ENCODE measurements at regions of chr2 and their contacts with region 1.

Region 1: GRCh38 chr2:3303583-3304406 is 73.8 kb downstream of the EIPR1 start:
- DNase-seq: peak; percentile 84 to 87 (median 86)
- ATAC-seq: peak; percentile 100
- H3K4me3 ChIP-seq: no peak overlapping the region
- H3K27ac ChIP-seq: no peak overlapping the region
- H3K4me1 ChIP-seq: peaks cover 0 to 26% of the 10 kb centered on the region in 2 experiments; a peak in 2 of 5 replicates
- H3K27me3 ChIP-seq: no peaks in the 10 kb centered on the region
- CTCF ChIP-seq: peak; percentile 88 to 93 (median 91)
- EP300 ChIP-seq: no peak
- POLR2A ChIP-seq: no peak
- RAD21 ChIP-seq: peak; percentile 74 to 86

Region 2: DNA sequence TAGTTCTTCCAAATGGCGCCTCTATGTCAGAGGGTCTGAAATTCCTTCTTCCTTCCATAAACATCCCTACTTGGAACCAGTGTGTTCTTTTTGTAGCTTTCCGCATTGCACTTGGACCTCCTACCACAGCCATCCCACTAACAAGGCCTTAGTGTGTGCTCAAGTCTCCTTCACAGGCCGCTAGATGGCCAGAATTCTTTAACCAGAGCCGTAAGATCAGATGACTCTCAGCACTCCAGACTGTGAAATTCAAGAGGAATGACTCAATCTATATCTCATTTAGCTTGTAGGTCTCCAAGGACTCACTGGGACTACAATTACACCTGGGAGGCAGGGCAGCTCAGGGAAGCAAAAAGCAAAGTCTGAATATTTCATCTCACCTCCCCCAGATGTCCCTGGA is 225.1 kb before region 1 on chr2:
- CTCF ChIA-PET with region 1: no interaction called
- POLR2A ChIA-PET with region 1: no interaction called
- in situ Hi-C with region 1: no loop called
- intact Hi-C with region 1: loop called (anchors 10 kb)
- DNase-seq: peak in 1 of 4 experiments; percentile 35
- ATAC-seq: peak; percentile 87
- H3K4me3 ChIP-seq: no peak overlapping the region
- H3K27ac ChIP-seq: no peak overlapping the region
- H3K4me1 ChIP-seq: peaks cover 0 to 3% of the 10 kb centered on the region in 2 experiments; a peak in 1 of 5 replicates
- H3K27me3 ChIP-seq: peaks cover 33 to 62% of the 10 kb centered on the region in 2 experiments; a peak in 4 of 5 replicates
- CTCF ChIP-seq: peak; percentile 38 to 44 (median 39); a peak in 3 of 6 replicates
- EP300 ChIP-seq: no peak
- POLR2A ChIP-seq: no peak
- RAD21 ChIP-seq: peak in 1 of 2 experiments; percentile 44; a peak in 2 of 4 replicates

Region 3: GRCh38 chr2:3179208-3179607 is 124.6 kb before region 1 on chr2:
- CTCF ChIA-PET with region 1: no interaction called
- POLR2A ChIA-PET with region 1: no interaction called
- in situ Hi-C with region 1: no loop called
- intact Hi-C with region 1: no loop called
- DNase-seq: peak in 1 of 4 experiments; percentile 12
- ATAC-seq: peak; percentile 86
- H3K4me3 ChIP-seq: no peak overlapping the region
- H3K27ac ChIP-seq: no peak overlapping the region
- H3K4me1 ChIP-seq: peaks cover 0 to 11% of the 10 kb centered on the region in 2 experiments; a peak in 2 of 5 replicates
- H3K27me3 ChIP-seq: no peaks in the 10 kb centered on the region
- CTCF ChIP-seq: peak; percentile 46 to 53 (median 51); a peak in 5 of 6 replicates
- EP300 ChIP-seq: no peak
- POLR2A ChIP-seq: no peak
- RAD21 ChIP-seq: peak in 1 of 2 experiments; percentile 27; a peak in 2 of 4 replicates

Region 4: GRCh38 chr2:3198119-3198518 is 105.7 kb before region 1 on chr2:
- CTCF ChIA-PET with region 1: no interaction called
- POLR2A ChIA-PET with region 1: no interaction called
- in situ Hi-C with region 1: no loop called
- intact Hi-C with region 1: loop called (anchors 1 kb)
- DNase-seq: peak in 1 of 4 experiments; percentile 22
- ATAC-seq: peak; percentile 92
- H3K4me3 ChIP-seq: no peak overlapping the region
- H3K27ac ChIP-seq: no peak overlapping the region
- H3K4me1 ChIP-seq: peaks cover 0 to 7% of the 10 kb centered on the region in 2 experiments; a peak in 2 of 5 replicates
- H3K27me3 ChIP-seq: no peaks in the 10 kb centered on the region
- CTCF ChIP-seq: peak; percentile 30 to 37 (median 34); a peak in 2 of 6 replicates
- EP300 ChIP-seq: no peak
- POLR2A ChIP-seq: no peak
- RAD21 ChIP-seq: peak in 1 of 2 experiments; percentile 27; a peak in 1 of 4 replicates

Measured in K562 (cell line).